ENCODE measurements at regions of chrX and their contacts with region 1.

Region 1: GRCh38 chrX:148474030-148474429 is 26.4 kb upstream of the AFF2 start:
- DNase-seq: no peak
- H3K4me3 Mint-ChIP-seq: no peak overlapping the region
- H3K27ac Mint-ChIP-seq: no peak overlapping the region
- H3K4me1 Mint-ChIP-seq: peaks cover 8% of the 10 kb centered on the region
- H3K27me3 Mint-ChIP-seq: no peaks in the 10 kb centered on the region

Region 2: GRCh38 chrX:149043401-149043800 is 569.4 kb after region 1 on chrX:
- CTCF ChIA-PET with region 1: interaction called, 11 read pairs
- intact Hi-C with region 1: no loop called
- DNase-seq: no peak
- H3K4me3 Mint-ChIP-seq: no peak overlapping the region
- H3K27ac Mint-ChIP-seq: no peak overlapping the region
- H3K4me1 Mint-ChIP-seq: no peaks in the 10 kb centered on the region
- H3K27me3 Mint-ChIP-seq: no peaks in the 10 kb centered on the region

Measured in activated naive CD4-positive, alpha-beta T cell treated with anti-CD3 and anti-CD28 coated beads for 36 hours (primary cell).